ENCODE measurements at regions of chr19 and their contacts with region 1.

Region 1: DNA sequence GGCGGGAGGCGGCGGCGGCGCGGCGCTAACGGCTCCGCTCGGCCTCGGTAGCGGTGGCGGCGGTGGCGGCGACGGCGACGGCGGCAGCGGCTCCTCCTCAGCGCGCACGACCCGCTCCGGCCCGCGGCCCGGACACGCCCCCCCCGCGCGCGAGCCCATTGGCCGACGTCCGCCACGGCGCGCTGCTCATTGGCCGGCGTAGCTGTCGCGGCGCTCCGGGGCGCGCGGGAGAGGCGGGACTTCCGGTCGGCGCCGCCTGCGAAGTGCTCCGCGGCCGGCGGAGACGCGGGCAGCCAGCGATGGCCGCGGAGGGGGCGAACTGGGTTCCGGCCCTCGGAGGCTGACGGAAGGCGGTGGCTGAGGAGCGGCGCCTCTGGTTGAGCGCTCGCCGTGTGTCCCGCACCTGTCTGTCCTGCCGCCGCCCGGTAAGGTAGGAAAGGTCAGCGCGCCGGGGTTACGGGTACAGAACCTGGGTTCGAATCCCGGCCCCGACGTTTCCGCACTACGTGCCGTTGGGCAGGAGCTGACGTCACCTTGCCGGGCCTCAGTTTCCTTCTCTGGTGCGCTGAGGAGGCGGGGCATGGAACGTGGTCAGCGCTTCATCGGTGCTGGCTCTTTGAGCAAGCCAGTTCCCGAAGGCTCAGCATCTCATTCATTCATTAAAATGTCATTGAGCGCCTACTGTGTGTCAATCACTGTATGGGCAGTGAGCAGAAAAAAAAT is at the start of gene ELAVL1:
- DNase-seq: peak; percentile 89
- H3K4me3 ChIP-seq: peak within 1 kb of the TSS; percentile 58 to 93 (median 70)
- H3K27ac ChIP-seq: peak within 1 kb of the TSS; percentile 9 to 81 (median 68)
- H3K4me1 ChIP-seq: peaks cover 31 to 32% of the 10 kb centered on the region in 2 donors
- H3K27me3 ChIP-seq: no peaks in the 10 kb centered on the region
- CTCF ChIP-seq: no peak
- POLR2A ChIP-seq: peak in 1 of 2 donors; percentile 77
- total RNA-seq, gene ELAVL1: 24.2 to 46.7 (median 42.4) TPM

Region 2: DNA sequence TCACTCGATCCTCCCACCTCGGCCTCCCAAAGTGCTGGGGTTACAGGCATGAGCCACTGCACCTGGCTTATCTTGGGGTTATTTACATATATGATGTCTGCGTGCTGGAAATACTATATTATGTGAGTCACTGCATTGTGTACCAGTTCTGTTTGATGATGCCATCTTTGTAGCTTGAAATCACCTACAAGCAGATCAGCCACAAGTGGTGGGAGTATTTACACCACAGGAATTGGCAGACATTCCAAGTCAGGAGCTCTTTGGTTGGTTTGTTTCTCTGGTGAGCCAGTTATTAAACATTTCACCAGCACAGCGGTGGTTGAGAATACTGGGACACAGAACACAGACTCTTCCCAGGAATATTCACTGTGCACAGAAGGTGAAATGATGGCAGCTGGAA is 57.8 kb before region 1 on chr19:
- intact Hi-C with region 1: loop called (anchors 5 kb)
- DNase-seq: no peak
- H3K4me3 ChIP-seq: no peak overlapping the region
- H3K27ac ChIP-seq: no peak overlapping the region
- H3K4me1 ChIP-seq: no peaks in the 10 kb centered on the region
- H3K27me3 ChIP-seq: no peaks in the 10 kb centered on the region
- CTCF ChIP-seq: no peak
- POLR2A ChIP-seq: no peak